Sigmoid colon (tissue), 7 donors: ENCODE measurements at regions of chr20 and their contacts with region 1.

Region 1: DNA sequence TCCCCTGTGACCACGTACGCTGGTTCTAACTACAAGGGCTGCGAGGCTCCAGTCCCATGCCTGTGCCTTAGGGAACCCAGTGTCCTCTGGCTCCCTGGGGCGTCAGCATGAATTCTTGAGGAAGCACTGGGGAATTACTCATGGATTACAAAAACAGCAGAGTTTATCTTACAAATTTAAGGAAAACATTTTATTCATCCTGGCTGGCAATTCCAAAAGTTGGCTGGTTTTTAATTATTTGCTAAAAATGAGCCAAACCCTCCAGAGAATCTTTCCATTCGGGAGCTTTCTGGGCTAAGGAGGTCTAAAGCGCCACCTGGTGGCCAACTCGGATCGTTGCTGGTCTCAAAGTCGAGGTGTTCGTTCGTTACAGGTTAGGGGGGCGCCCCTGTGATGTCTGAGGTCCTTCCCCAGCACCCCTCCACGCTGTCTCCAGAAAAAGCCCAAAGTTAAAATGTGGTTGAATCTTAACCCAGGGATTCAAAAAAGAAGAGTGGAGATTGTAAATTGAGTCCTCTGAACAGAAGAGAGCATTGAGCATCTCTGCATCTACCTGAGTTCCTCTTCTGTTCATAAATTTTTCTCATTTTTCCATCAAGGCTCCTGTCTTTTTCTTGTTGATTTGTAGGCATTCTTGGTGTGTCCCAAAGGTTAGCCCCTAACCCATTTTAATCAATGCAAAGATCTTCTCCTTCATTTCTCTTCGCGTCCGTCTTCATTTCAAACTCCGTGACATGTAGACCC is 99.4 kb downstream of the BFSP1 start:
- DNase-seq: peak; percentile 72
- H3K4me3 ChIP-seq: no peak overlapping the region
- H3K27ac ChIP-seq: no peak overlapping the region
- H3K4me1 ChIP-seq: no peaks in the 10 kb centered on the region
- H3K27me3 ChIP-seq: peaks cover 0 to 6% (median 0%) of the 10 kb centered on the region in 3 donors
- CTCF ChIP-seq: peak; percentile 61 to 87 (median 64)
- EP300 ChIP-seq: no peak
- POLR2A ChIP-seq: no peak

Region 2: GRCh38 chr20:16801919-16802911 is 629.6 kb before region 1 on chr20:
- intact Hi-C with region 1: loop called (anchors 1 kb)
- DNase-seq: peak; percentile 73
- H3K4me3 ChIP-seq: no peak overlapping the region
- H3K27ac ChIP-seq: no peak overlapping the region
- H3K4me1 ChIP-seq: no peaks in the 10 kb centered on the region
- H3K27me3 ChIP-seq: peaks cover 0 to 26% (median 4%) of the 10 kb centered on the region in 3 donors
- CTCF ChIP-seq: peak in 3 of 4 experiments; percentile 58 to 86 (median 69)
- EP300 ChIP-seq: no peak
- POLR2A ChIP-seq: no peak

Region 3: GRCh38 chr20:18304585-18304984 is 872.8 kb after region 1 on chr20:
- intact Hi-C with region 1: no loop called
- DNase-seq: no peak
- H3K4me3 ChIP-seq: no peak overlapping the region
- H3K27ac ChIP-seq: no peak overlapping the region
- H3K4me1 ChIP-seq: no peaks in the 10 kb centered on the region
- H3K27me3 ChIP-seq: no peaks in the 10 kb centered on the region
- CTCF ChIP-seq: no peak
- EP300 ChIP-seq: no peak
- POLR2A ChIP-seq: no peak